H1 (cell line): ENCODE measurements at regions of chr1 and their contacts with region 1.

Region 1: GRCh38 chr1:36994868-36995267 is 39.4 kb downstream of the GRIK3 start:
- DNase-seq: no peak
- H3K4me3 ChIP-seq: no peak overlapping the region
- H3K27ac ChIP-seq: no peak overlapping the region
- H3K4me1 ChIP-seq: no peaks in the 10 kb centered on the region; a peak in 1 of 7 replicates
- H3K27me3 ChIP-seq: no peaks in the 10 kb centered on the region
- CTCF ChIP-seq: peak; percentile 25 to 39 (median 30)
- EP300 ChIP-seq: no peak
- POLR2A ChIP-seq: no peak
- RAD21 ChIP-seq: peak in 1 of 2 experiments; percentile 46; a peak in 2 of 4 replicates

Region 2: GRCh38 chr1:36981771-36982622 is 12.9 kb before region 1 on chr1:
- CTCF ChIA-PET with region 1: interaction called, 13 read pairs
- POLR2A ChIA-PET with region 1: no interaction called
- DNase-seq: no peak
- H3K4me3 ChIP-seq: no peak overlapping the region
- H3K27ac ChIP-seq: no peak overlapping the region
- H3K4me1 ChIP-seq: peaks cover 0 to 10% (median 5%) of the 10 kb centered on the region in 4 experiments; a peak in 3 of 7 replicates
- H3K27me3 ChIP-seq: no peaks in the 10 kb centered on the region
- CTCF ChIP-seq: peak in 1 of 3 experiments; percentile 16; a peak in 1 of 4 replicates
- EP300 ChIP-seq: no peak
- POLR2A ChIP-seq: no peak
- RAD21 ChIP-seq: no peak

Region 3: DNA sequence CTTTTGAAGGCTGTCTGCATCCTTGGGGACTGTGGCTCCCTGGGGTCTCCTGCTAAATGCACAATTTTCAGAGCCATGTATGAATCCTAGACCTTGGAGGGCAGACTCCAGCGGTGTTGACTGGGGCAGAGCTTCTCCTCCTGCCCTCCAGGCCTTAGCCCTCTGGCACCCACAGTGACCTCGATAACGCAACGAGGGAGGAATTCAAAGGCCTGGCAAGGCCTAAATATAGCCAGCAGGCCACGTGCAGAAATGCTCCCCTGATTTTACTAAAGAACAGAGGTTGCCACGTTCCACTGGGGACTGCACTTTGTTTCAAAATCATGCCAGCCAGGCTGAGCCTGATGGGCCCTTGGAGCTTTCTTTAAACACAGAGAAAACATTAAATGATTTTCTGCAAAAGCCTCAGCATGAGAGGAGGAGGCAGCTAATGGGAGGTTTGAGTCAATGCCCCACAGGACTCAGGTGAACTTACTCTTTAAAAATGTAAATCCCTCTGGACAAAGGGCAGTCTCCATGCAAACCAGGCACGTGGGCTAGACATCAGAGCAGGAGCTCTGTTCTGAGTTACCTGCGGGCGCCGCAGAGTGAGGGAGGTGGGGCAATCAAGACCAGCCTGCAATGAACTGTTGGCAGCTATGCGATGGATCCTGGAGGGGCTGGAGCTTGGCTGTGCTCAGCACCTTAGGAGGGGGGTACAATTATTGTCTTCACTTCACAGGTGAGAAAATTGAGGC is 11.4 kb after region 1 on chr1:
- CTCF ChIA-PET with region 1: interaction called, 11 read pairs
- POLR2A ChIA-PET with region 1: no interaction called
- DNase-seq: no peak
- H3K4me3 ChIP-seq: no peak overlapping the region
- H3K27ac ChIP-seq: no peak overlapping the region; the same call in 1 of the 2 replicates
- H3K4me1 ChIP-seq: peaks cover 0 to 11% (median 8%) of the 10 kb centered on the region in 4 experiments; a peak in 4 of 7 replicates
- H3K27me3 ChIP-seq: no peaks in the 10 kb centered on the region; a peak in 1 of 7 replicates
- CTCF ChIP-seq: no peak
- EP300 ChIP-seq: no peak
- POLR2A ChIP-seq: no peak
- RAD21 ChIP-seq: no peak

Region 4: GRCh38 chr1:37071829-37072228 is 77.0 kb after region 1 on chr1:
- CTCF ChIA-PET with region 1: no interaction called
- POLR2A ChIA-PET with region 1: no interaction called
- DNase-seq: no peak
- H3K4me3 ChIP-seq: no peak overlapping the region
- H3K27ac ChIP-seq: no peak overlapping the region
- H3K4me1 ChIP-seq: peaks cover 0 to 3% (median under 1%) of the 10 kb centered on the region in 4 experiments; a peak in 3 of 7 replicates
- H3K27me3 ChIP-seq: no peaks in the 10 kb centered on the region
- CTCF ChIP-seq: no peak
- EP300 ChIP-seq: no peak
- POLR2A ChIP-seq: no peak
- RAD21 ChIP-seq: no peak